Panc1 (cell line): ENCODE measurements at regions of chr11 and their contacts with region 1.

Region 1: GRCh38 chr11:134139873-134140331 is 71.0 kb downstream of the JAM3 start:
- DNase-seq: peak; percentile 68
- ATAC-seq: peak; percentile 89
- H3K4me3 ChIP-seq: no peak overlapping the region; a peak in 1 of 4 replicates
- H3K27ac ChIP-seq: no peak overlapping the region
- H3K4me1 ChIP-seq: 0 out of 2 replicates have a peak, but pooled peaks cover 5% of the 10 kb centered on the region
- H3K27me3 ChIP-seq: no peaks in the 10 kb centered on the region
- CTCF ChIP-seq: peak; percentile 95

Region 2: GRCh38 chr11:133917921-133918605 is 221.8 kb before region 1 on chr11:
- CTCF ChIA-PET with region 1: no interaction called
- POLR2A ChIA-PET with region 1: interaction called, 10 read pairs
- in situ Hi-C with region 1: no loop called
- intact Hi-C with region 1: no loop called
- DNase-seq: no peak
- ATAC-seq: no peak
- H3K4me3 ChIP-seq: no peak overlapping the region
- H3K27ac ChIP-seq: no peak overlapping the region
- H3K4me1 ChIP-seq: no peaks in the 10 kb centered on the region
- H3K27me3 ChIP-seq: peaks cover 2% of the 10 kb centered on the region; the same call in 1 of the 2 replicates
- CTCF ChIP-seq: no peak

Region 3: DNA sequence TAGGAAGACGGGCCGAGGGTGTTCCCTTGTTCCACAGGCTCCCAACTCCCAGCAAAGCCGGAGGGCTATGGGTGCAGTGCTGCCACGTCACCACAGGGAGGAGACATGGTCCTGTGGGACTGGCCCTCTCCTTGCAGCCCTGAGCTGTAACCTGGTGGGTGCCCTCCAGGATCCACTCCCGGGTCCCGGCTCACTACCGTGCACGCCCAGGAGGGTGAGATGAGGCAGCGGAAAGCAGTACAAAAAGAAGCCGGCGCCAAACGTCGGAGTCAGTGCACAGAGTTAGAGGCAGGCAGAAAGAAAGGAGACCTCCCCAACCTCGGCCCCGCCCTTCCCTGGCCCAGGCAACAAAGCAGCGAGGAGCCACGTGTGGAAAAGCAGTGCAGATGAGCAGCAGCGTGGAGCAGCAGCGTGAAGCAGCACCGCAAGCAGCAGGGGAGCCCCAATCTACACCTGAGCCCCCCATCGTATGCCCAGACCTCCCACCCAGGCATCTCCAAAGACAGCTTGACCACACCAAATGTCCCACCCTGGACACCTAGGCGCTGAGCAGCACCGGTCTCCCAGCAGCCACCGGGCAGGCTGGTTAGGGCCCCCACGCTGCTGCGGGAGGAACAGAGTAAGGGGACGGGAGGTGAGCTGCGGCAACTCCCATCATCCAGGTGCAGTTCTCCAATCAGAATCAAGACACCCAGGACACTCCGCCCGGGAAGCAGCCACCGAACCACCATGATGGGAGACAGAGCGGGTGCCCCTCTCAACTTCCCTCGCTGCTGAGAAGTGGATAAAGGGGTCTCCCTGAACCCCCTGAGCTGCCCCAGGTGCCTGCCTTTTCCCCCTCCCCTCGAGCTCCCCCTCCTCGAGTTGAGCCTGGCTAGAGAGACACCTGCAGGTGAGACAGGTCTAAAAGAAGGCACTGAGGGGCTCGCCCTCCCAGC is 211.9 kb before region 1 on chr11:
- CTCF ChIA-PET with region 1: interaction called, 3 read pairs
- POLR2A ChIA-PET with region 1: no interaction called
- in situ Hi-C with region 1: no loop called
- intact Hi-C with region 1: loop called (anchors 2 kb)
- DNase-seq: peak; percentile 53
- ATAC-seq: peak; percentile 91
- H3K4me3 ChIP-seq: peak overlapping the region; percentile 20 to 37
- H3K27ac ChIP-seq: no peak overlapping the region
- H3K4me1 ChIP-seq: peaks cover 4% of the 10 kb centered on the region
- H3K27me3 ChIP-seq: no peaks in the 10 kb centered on the region
- CTCF ChIP-seq: peak; percentile 98

Region 4: DNA sequence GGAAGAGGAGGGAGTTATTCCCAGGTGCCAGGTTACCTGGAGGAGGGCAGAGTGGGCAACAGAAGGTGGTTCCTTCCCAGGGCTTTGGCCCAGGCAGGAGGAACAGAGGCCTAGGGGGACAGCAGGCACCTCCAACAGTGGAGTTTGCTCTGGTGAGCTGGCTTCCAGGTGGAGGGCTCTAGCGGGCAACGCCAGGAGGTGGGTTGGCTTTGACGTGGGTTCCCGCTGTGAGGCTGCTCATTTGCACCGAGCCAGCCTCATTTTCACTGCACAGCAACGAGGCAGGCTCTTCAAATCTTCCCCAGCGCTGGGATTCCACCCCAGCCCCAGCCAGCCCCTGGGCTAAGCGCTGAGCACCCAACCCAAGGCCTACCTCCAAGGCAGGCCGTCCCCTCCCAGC is 191.2 kb before region 1 on chr11:
- CTCF ChIA-PET with region 1: interaction called, 10 read pairs
- POLR2A ChIA-PET with region 1: no interaction called
- in situ Hi-C with region 1: no loop called
- intact Hi-C with region 1: no loop called
- DNase-seq: no peak
- ATAC-seq: no peak
- H3K4me3 ChIP-seq: no peak overlapping the region
- H3K27ac ChIP-seq: no peak overlapping the region
- H3K4me1 ChIP-seq: peaks cover 12% of the 10 kb centered on the region
- H3K27me3 ChIP-seq: no peaks in the 10 kb centered on the region
- CTCF ChIP-seq: no peak

Region 5: GRCh38 chr11:134020598-134020997 is 119.3 kb before region 1 on chr11:
- CTCF ChIA-PET with region 1: interaction called, 11 read pairs
- POLR2A ChIA-PET with region 1: no interaction called
- in situ Hi-C with region 1: no loop called
- intact Hi-C with region 1: no loop called
- DNase-seq: no peak
- ATAC-seq: no peak
- H3K4me3 ChIP-seq: no peak overlapping the region
- H3K27ac ChIP-seq: no peak overlapping the region
- H3K4me1 ChIP-seq: no peaks in the 10 kb centered on the region
- H3K27me3 ChIP-seq: peaks cover 33% of the 10 kb centered on the region
- CTCF ChIP-seq: no peak

Region 6: DNA sequence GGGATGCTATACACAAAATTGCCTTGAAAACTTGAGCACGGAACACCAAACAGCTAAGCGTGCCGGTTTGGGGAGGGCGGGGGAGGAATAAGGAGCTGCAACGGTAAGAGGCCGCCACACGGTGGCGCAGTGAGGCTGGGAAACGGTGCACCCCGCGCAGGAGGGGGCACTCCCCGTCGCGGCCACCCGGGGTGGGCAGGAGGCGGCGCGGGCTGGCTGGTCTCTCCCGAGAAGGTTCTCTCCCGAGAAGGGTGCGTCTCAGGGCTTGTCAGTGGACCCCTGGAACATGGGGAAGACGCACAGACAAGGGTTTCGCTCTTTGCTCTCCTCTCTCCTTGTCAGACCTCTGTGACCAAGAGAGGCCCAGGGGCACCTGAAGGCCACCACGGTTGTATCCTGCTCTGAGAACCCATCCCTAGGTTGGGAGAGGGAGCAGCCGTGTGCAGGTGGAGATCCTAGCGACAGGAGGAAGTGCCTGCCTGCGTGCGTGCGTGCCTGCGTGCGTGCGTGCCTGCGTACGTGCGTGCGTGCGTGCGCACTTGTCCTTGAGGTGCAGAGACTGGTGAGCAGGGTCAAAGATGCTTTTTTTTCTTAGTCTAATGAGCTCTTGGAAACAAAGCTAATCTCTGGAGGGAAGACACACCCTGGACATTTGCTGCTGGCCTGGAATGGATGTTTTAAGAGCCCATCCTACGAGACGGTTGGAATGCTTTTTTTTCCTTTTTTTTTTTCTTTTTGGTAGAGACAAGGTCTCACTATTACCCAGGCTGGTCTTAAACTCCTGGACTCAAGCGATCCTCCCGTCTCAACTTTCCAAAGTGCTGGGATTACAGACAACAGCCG is 89.1 kb before region 1 on chr11:
- CTCF ChIA-PET with region 1: interaction called, 11 read pairs
- POLR2A ChIA-PET with region 1: no interaction called
- in situ Hi-C with region 1: no loop called
- intact Hi-C with region 1: loop called (anchors 1 kb)
- DNase-seq: peak; percentile 30
- ATAC-seq: peak; percentile 90
- H3K4me3 ChIP-seq: peak overlapping the region; percentile 38 to 57
- H3K27ac ChIP-seq: no peak overlapping the region; the same call in 1 of the 2 replicates
- H3K4me1 ChIP-seq: peaks cover 9% of the 10 kb centered on the region
- H3K27me3 ChIP-seq: no peaks in the 10 kb centered on the region
- CTCF ChIP-seq: peak; percentile 98

Region 7: GRCh38 chr11:134068829-134069425 is 71.0 kb before region 1 on chr11 and contains the start of gene JAM3:
- CTCF ChIA-PET with region 1: no interaction called
- POLR2A ChIA-PET with region 1: no interaction called
- in situ Hi-C with region 1: no loop called
- intact Hi-C with region 1: no loop called
- DNase-seq: no peak
- ATAC-seq: peak; percentile 98
- H3K4me3 ChIP-seq: peak within 1 kb of the TSS; percentile 64 to 79
- H3K27ac ChIP-seq: peak within 1 kb of the TSS; percentile 65
- H3K4me1 ChIP-seq: peaks cover 7% of the 10 kb centered on the region; the same call in 1 of the 2 replicates
- H3K27me3 ChIP-seq: peaks cover 15% of the 10 kb centered on the region
- CTCF ChIP-seq: no peak
- total RNA-seq, gene JAM3: 45.4 TPM

Region 8: GRCh38 chr11:134599299-134599771 is 459.4 kb after region 1 on chr11:
- CTCF ChIA-PET with region 1: no interaction called
- POLR2A ChIA-PET with region 1: no interaction called
- in situ Hi-C with region 1: no loop called
- intact Hi-C with region 1: no loop called
- DNase-seq: no peak
- ATAC-seq: no peak
- H3K4me3 ChIP-seq: no peak overlapping the region
- H3K27ac ChIP-seq: no peak overlapping the region
- H3K4me1 ChIP-seq: no peaks in the 10 kb centered on the region
- H3K27me3 ChIP-seq: peaks cover 10% of the 10 kb centered on the region
- CTCF ChIP-seq: no peak